MCF 10A (cell line): ENCODE measurements at regions of chr6 and their contacts with region 1.

Region 1: DNA sequence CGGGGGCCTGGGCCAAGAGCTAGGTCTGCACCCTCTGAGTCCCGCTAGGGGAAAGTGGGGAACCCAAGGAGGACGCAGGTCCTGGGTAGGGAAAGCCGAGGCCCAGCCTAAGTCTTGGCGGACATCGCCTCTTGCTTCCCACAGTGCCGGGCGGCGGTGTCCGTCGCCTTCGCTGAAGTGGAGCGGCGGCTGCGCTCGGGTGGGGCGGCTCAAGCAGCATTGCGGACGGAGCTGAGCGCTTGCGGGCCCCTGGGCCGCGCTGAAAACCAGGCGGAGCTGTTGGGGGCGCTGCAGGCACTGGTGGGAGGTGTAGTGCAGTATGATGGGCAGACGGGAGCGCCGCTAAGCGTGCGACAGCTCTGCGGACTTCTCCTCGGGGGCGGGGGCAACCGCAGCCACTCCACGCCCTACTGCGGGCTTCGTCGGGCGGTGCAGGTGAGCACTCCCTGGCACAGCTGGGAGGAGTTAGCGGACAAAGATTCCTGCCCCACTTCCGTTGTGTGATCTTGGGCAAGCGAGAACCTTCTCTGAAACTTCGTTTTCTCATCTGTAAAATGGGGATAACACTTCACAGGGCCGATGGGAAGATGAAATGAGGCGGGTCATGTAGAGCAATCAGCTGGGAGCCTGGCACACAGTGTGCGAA is 4.2 kb downstream of the PRSS16 start:
- DNase-seq: peak; percentile 90
- H3K4me3 Mint-ChIP-seq: peak overlapping the region; percentile 99
- H3K27ac Mint-ChIP-seq: peak overlapping the region; percentile 84
- H3K4me1 Mint-ChIP-seq: no peaks in the 10 kb centered on the region
- H3K27me3 Mint-ChIP-seq: no peaks in the 10 kb centered on the region
- CTCF ChIP-seq: peak; percentile 57

Region 2: GRCh38 chr6:27237089-27237803 is 14.5 kb before region 1 on chr6:
- CTCF ChIA-PET with region 1: interaction called, 3 read pairs
- POLR2A ChIA-PET with region 1: interaction called, 19 read pairs
- intact Hi-C with region 1: no loop called
- DNase-seq: peak; percentile 52
- H3K4me3 Mint-ChIP-seq: peak overlapping the region; percentile 75
- H3K27ac Mint-ChIP-seq: peak overlapping the region; percentile 51
- H3K4me1 Mint-ChIP-seq: peaks cover 13% of the 10 kb centered on the region
- H3K27me3 Mint-ChIP-seq: no peaks in the 10 kb centered on the region
- CTCF ChIP-seq: no peak

Region 3: GRCh38 chr6:27275025-27275956 is 23.6 kb after region 1 on chr6:
- CTCF ChIA-PET with region 1: interaction called, 7 read pairs
- POLR2A ChIA-PET with region 1: interaction called, 17 read pairs
- intact Hi-C with region 1: no loop called
- DNase-seq: no peak
- H3K4me3 Mint-ChIP-seq: no peak overlapping the region
- H3K27ac Mint-ChIP-seq: no peak overlapping the region
- H3K4me1 Mint-ChIP-seq: no peaks in the 10 kb centered on the region
- H3K27me3 Mint-ChIP-seq: no peaks in the 10 kb centered on the region
- CTCF ChIP-seq: no peak

Region 4: DNA sequence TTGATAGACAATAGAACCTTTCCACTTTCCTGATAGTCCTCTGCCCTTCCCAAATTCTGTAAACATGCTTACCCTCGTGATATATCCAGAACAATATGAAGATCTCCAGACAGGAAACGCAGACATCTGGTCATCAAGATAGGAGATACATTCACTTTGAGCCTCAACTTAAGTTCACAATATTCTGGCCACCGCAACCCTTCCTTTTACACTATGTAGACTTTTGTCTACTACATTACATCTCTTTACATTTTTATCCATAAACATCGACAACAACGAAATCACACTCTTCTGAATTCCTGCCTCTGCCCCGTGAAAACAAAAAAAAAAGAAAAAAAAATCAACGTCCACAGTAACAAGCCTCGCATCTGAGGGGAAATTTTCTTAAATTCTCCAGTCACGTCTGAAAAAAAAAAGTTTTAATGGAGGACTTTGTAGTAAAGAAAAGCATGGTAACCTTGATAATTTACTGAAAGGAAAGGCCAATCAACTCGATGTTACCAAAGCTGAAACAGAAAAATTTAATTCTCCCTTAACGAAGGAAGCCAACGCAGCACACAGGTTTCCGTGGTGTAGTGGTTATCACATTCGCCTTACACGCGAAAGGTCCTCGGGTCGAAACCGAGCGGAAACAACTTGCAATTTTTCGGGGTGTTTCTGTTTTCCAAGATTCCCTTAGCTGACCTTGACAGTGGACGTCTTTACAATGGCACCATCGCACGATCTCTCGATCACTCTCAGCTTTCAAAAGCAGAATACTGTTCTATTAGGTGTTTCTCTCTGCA is 38.5 kb after region 1 on chr6:
- CTCF ChIA-PET with region 1: interaction called, 7 read pairs
- POLR2A ChIA-PET with region 1: interaction called, 29 read pairs
- intact Hi-C with region 1: no loop called
- DNase-seq: peak; percentile 56
- H3K4me3 Mint-ChIP-seq: peak overlapping the region; percentile 59
- H3K27ac Mint-ChIP-seq: peak overlapping the region; percentile 73
- H3K4me1 Mint-ChIP-seq: peaks cover 41% of the 10 kb centered on the region
- H3K27me3 Mint-ChIP-seq: no peaks in the 10 kb centered on the region
- CTCF ChIP-seq: no peak

Region 5: GRCh38 chr6:27332692-27333641 is 81.2 kb after region 1 on chr6:
- CTCF ChIA-PET with region 1: no interaction called
- POLR2A ChIA-PET with region 1: interaction called, 10 read pairs
- intact Hi-C with region 1: no loop called
- DNase-seq: peak; percentile 84
- H3K4me3 Mint-ChIP-seq: peak overlapping the region; percentile 78
- H3K27ac Mint-ChIP-seq: peak overlapping the region; percentile 27
- H3K4me1 Mint-ChIP-seq: peaks cover 18% of the 10 kb centered on the region
- H3K27me3 Mint-ChIP-seq: no peaks in the 10 kb centered on the region
- CTCF ChIP-seq: no peak

Region 6: GRCh38 chr6:27565821-27566766 is 314.4 kb after region 1 on chr6:
- CTCF ChIA-PET with region 1: no interaction called
- POLR2A ChIA-PET with region 1: no interaction called
- intact Hi-C with region 1: no loop called
- DNase-seq: no peak
- H3K4me3 Mint-ChIP-seq: no peak overlapping the region
- H3K27ac Mint-ChIP-seq: no peak overlapping the region
- H3K4me1 Mint-ChIP-seq: peaks cover 7% of the 10 kb centered on the region
- H3K27me3 Mint-ChIP-seq: no peaks in the 10 kb centered on the region
- CTCF ChIP-seq: no peak